Ascending aorta (tissue), 2 donors: ENCODE measurements at regions of chr1 and their contacts with region 1.

Region 1: DNA sequence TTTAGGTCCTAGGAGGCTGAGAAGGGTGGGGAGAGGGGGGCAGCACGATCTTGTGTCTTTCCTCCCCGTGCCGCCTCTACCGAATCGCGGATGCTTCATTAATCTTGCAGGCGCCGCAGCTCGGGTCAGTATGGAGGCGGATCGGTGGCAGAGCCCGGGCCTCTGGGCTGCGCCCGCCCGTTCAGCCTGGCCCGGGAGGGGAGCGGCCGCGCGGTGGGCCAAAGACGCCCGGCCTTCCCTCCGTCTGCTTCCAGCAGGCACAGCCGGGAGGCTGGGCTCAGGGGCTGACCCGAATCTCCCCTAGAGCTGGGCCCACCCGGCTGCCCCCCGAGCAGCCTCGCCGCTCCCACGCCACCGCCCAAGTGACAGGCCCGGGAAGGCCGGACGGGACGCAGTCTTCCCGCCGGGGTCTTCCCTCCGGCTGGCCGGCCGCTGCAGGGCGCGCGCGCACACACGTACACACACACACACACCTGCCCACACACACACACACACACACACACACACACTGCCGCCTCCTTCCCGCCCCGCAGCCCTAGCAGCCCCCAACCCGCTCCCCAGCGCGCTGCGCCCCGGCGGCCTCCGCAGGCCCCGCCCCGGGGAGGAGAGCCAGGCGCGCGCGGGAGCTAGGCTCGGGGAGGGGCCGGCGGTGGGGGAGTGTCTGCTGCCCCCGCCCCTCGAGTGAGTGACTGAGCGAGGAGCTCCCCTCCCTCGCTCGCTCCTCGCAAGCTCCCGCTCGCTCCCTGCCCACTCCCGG is at the start of gene C1orf21:
- DNase-seq: peak; percentile 54 to 93
- H3K4me3 ChIP-seq: peak within 1 kb of the TSS; percentile 87 to 98
- H3K27ac ChIP-seq: peak within 1 kb of the TSS; percentile 73 to 75
- H3K4me1 ChIP-seq: peaks cover 0 to 5% of the 10 kb centered on the region in 2 donors
- H3K27me3 ChIP-seq: no peaks in the 10 kb centered on the region
- CTCF ChIP-seq: no peak
- total RNA-seq, gene C1orf21: 21.8 TPM

Region 2: DNA sequence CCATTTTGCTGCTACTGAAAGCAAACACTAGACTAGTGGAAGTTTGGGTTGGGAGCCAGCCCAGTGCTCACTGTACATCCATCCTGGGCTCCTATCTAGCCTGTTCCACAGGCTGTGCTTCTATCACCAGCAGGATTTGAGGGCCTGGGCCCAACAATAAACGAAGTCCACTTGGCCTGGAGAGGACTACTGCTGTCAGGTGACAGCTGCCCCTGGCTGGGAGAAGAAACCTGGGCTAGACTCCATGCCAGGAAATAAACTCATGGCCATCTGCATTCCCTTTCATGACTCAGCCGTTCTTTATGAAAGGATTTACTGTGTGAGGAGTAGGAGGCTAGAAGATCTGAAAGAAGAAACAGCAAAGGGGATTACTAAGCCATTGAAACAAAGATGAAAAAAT is 384.4 kb before region 1 on chr1:
- intact Hi-C with region 1: no loop called
- DNase-seq: no peak
- H3K4me3 ChIP-seq: no peak overlapping the region
- H3K27ac ChIP-seq: no peak overlapping the region
- H3K4me1 ChIP-seq: no peaks in the 10 kb centered on the region
- H3K27me3 ChIP-seq: no peaks in the 10 kb centered on the region
- CTCF ChIP-seq: no peak

Region 3: GRCh38 chr1:184425449-184426218 is 39.1 kb after region 1 on chr1:
- intact Hi-C with region 1: no loop called
- DNase-seq: no peak
- H3K4me3 ChIP-seq: no peak overlapping the region
- H3K27ac ChIP-seq: no peak overlapping the region
- H3K4me1 ChIP-seq: no peaks in the 10 kb centered on the region
- H3K27me3 ChIP-seq: no peaks in the 10 kb centered on the region
- CTCF ChIP-seq: no peak

Region 4: GRCh38 chr1:184465489-184466146 is 79.1 kb after region 1 on chr1:
- intact Hi-C with region 1: no loop called
- DNase-seq: no peak
- H3K4me3 ChIP-seq: no peak overlapping the region
- H3K27ac ChIP-seq: no peak overlapping the region
- H3K4me1 ChIP-seq: no peaks in the 10 kb centered on the region
- H3K27me3 ChIP-seq: no peaks in the 10 kb centered on the region
- CTCF ChIP-seq: no peak

Region 5: DNA sequence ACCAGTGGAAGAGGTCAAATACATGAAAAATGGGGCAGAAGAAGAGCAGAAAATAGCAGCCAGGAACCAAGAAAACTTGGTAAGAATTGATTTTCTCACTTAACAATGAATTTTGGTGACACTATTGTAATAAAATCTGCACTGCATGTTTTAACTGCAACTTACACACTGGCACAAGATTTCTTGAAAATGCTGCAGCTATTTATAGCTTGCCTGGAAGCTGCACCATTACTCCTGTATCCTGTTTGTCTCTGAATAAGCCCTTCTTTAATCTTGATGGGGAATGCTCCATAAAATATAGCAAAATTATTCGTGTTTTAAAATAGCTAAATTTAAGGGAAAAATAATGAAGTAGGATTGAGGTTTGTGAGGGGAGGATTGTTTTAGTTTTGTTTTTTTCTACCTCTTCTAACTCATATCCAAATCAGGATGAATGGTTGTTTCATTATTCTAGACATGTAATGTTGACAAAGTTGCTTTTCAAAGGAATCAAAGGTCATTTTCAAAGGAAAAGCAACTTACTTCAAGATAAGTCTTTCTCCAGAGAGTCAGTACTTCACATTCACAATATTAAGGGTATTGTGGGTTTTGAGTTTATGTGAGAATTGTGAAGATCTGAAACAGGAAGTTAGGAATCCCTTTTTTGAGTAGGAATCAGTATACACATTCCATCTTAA is 121.3 kb after region 1 on chr1:
- intact Hi-C with region 1: loop called (anchors 5 kb)
- DNase-seq: no peak
- H3K4me3 ChIP-seq: no peak overlapping the region
- H3K27ac ChIP-seq: peak overlapping the region; percentile 20 to 39
- H3K4me1 ChIP-seq: peaks cover 0 to 12% of the 10 kb centered on the region in 2 donors
- H3K27me3 ChIP-seq: no peaks in the 10 kb centered on the region
- CTCF ChIP-seq: no peak